HepG2 (cell line): ENCODE measurements at regions of chr2 and their contacts with region 1.

Region 1: DNA sequence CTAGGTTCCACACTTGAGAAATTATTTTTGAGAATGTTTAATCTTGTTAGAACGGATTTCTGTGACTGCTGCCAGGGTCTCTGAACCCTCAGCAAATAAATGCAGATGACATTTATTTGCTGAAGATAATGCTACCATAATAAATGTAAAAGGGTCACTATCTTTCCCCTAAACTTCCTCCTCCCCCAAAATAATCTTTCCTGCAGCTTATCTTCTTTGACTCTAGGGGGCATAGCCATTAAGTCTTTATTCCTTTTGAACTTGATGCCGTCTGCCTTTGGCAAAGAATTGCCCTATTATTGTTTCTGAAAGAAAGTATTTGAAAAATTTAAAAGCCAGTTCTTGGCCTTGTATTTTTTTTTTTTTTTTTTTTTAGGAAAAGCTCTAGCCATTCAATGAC is 63.6 kb upstream of the ACSL3 start:
- DNase-seq: peak; percentile 74
- ATAC-seq: no peak
- H3K4me3 ChIP-seq: peak overlapping the region; percentile 22 to 51 (median 36); a peak in 5 of 6 replicates
- H3K27ac ChIP-seq: peak overlapping the region; percentile 96
- H3K4me1 ChIP-seq: peaks cover 80% of the 10 kb centered on the region
- H3K27me3 ChIP-seq: no peaks in the 10 kb centered on the region
- CTCF ChIP-seq: peak; percentile 67
- EP300 ChIP-seq: no peak
- POLR2A ChIP-seq: no peak
- RAD21 ChIP-seq: no peak

Region 2: GRCh38 chr2:222690564-222691200 is 106.6 kb before region 1 on chr2:
- CTCF ChIA-PET with region 1: interaction called, 7 read pairs
- POLR2A ChIA-PET with region 1: interaction called, 3 read pairs
- in situ Hi-C with region 1: no loop called
- intact Hi-C with region 1: loop called (anchors 1 kb)
- DNase-seq: peak; percentile 81
- ATAC-seq: peak; percentile 92
- H3K4me3 ChIP-seq: no peak overlapping the region
- H3K27ac ChIP-seq: no peak overlapping the region
- H3K4me1 ChIP-seq: peaks cover 12% of the 10 kb centered on the region
- H3K27me3 ChIP-seq: no peaks in the 10 kb centered on the region
- CTCF ChIP-seq: peak; percentile 99
- EP300 ChIP-seq: peak in 1 of 2 experiments; percentile 20; a peak in 1 of 4 replicates
- POLR2A ChIP-seq: no peak
- RAD21 ChIP-seq: peak; percentile 97

Region 3: DNA sequence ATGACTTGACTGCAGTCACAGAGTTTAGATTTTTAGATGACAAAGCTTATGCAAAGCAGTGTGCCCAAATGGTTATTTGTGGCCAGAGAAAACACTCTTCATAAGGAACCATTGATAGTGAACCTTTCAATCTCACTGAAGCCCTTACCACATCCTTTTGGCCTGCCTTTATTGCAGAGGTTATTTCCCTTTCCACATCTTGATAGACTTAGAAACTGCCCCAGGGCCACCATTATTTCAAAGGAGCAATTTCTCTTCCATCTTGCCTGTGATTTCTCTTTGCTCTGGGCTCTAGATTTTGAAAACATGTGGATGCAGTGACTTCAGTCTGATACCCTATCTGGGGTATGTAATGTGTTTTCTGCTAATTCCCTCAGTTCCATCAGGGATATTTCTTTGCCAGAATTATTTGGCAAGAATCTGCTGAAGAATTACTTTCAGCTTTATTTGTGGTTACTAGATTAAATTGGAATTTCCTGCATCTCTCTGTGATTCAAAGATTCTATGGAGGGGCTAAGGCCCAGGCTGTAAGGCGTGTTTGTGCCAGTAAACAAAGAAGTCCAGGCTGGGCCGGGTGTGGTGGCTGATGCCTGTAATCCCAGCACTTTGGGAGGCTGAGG is 74.8 kb before region 1 on chr2:
- CTCF ChIA-PET with region 1: no interaction called
- POLR2A ChIA-PET with region 1: no interaction called
- in situ Hi-C with region 1: no loop called
- intact Hi-C with region 1: no loop called
- DNase-seq: no peak
- ATAC-seq: no peak
- H3K4me3 ChIP-seq: no peak overlapping the region
- H3K27ac ChIP-seq: no peak overlapping the region
- H3K4me1 ChIP-seq: peaks cover 25% of the 10 kb centered on the region
- H3K27me3 ChIP-seq: no peaks in the 10 kb centered on the region
- CTCF ChIP-seq: no peak
- EP300 ChIP-seq: no peak
- POLR2A ChIP-seq: no peak
- RAD21 ChIP-seq: no peak

Region 4: GRCh38 chr2:222734703-222735014 is 62.6 kb before region 1 on chr2:
- CTCF ChIA-PET with region 1: no interaction called
- POLR2A ChIA-PET with region 1: interaction called, 23 read pairs
- in situ Hi-C with region 1: no loop called
- intact Hi-C with region 1: loop called (anchors 1 kb)
- DNase-seq: peak; percentile 49
- ATAC-seq: peak; percentile 33
- H3K4me3 ChIP-seq: no peak overlapping the region; a peak in 1 of 6 replicates
- H3K27ac ChIP-seq: peak overlapping the region; percentile 87
- H3K4me1 ChIP-seq: peaks cover 87% of the 10 kb centered on the region
- H3K27me3 ChIP-seq: no peaks in the 10 kb centered on the region
- CTCF ChIP-seq: no peak
- EP300 ChIP-seq: no peak
- POLR2A ChIP-seq: no peak
- RAD21 ChIP-seq: no peak

Region 5: DNA sequence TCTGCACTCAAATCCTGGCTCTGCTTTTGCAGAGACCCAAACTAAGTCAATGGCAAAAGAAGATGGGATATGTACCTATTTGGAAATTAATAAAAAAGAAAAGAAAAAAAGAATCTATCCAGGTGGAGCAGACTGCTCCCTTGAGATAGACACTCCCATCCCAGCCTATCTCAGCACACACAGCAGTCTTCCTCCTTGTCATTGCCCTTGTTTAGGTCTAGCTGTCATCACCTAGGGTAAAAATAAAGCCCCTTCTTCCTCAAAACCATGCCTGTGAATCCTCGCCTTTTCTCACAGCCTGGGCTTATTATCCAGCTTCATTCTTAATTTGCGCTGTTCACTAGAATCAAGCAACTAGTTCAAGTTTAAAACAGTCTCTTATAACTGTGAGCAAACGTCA is 32.9 kb after region 1 on chr2:
- CTCF ChIA-PET with region 1: no interaction called
- POLR2A ChIA-PET with region 1: interaction called, 12 read pairs
- in situ Hi-C with region 1: no loop called
- intact Hi-C with region 1: no loop called
- DNase-seq: no peak
- ATAC-seq: no peak
- H3K4me3 ChIP-seq: no peak overlapping the region
- H3K27ac ChIP-seq: no peak overlapping the region
- H3K4me1 ChIP-seq: peaks cover 30% of the 10 kb centered on the region
- H3K27me3 ChIP-seq: no peaks in the 10 kb centered on the region
- CTCF ChIP-seq: no peak
- EP300 ChIP-seq: no peak
- POLR2A ChIP-seq: no peak
- RAD21 ChIP-seq: no peak

Region 6: DNA sequence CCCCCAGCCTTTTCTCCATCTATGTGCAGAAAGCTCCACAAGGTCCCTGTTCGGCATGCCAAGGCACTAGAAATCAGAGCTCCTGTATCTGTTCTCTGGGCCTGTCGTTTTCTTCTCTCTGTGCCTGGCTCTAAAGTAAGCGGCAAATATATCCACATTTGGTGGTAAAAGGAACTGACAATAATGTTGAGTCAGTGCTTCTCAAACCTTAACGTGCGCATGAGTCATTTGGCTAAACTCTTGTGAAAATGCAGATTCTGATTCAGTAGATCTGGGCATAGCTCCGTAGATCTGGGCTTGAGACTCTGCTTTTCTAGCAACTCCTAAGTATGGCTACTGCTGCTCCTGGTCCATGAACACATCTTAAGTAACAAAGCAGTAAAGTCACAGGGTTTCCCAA is 47.1 kb after region 1 on chr2:
- CTCF ChIA-PET with region 1: interaction called, 5 read pairs
- POLR2A ChIA-PET with region 1: interaction called, 33 read pairs
- in situ Hi-C with region 1: no loop called
- intact Hi-C with region 1: loop called (anchors 1 kb)
- DNase-seq: no peak
- ATAC-seq: no peak
- H3K4me3 ChIP-seq: no peak overlapping the region
- H3K27ac ChIP-seq: no peak overlapping the region
- H3K4me1 ChIP-seq: peaks cover 40% of the 10 kb centered on the region
- H3K27me3 ChIP-seq: no peaks in the 10 kb centered on the region
- CTCF ChIP-seq: no peak
- EP300 ChIP-seq: no peak
- POLR2A ChIP-seq: no peak
- RAD21 ChIP-seq: no peak

Region 7: DNA sequence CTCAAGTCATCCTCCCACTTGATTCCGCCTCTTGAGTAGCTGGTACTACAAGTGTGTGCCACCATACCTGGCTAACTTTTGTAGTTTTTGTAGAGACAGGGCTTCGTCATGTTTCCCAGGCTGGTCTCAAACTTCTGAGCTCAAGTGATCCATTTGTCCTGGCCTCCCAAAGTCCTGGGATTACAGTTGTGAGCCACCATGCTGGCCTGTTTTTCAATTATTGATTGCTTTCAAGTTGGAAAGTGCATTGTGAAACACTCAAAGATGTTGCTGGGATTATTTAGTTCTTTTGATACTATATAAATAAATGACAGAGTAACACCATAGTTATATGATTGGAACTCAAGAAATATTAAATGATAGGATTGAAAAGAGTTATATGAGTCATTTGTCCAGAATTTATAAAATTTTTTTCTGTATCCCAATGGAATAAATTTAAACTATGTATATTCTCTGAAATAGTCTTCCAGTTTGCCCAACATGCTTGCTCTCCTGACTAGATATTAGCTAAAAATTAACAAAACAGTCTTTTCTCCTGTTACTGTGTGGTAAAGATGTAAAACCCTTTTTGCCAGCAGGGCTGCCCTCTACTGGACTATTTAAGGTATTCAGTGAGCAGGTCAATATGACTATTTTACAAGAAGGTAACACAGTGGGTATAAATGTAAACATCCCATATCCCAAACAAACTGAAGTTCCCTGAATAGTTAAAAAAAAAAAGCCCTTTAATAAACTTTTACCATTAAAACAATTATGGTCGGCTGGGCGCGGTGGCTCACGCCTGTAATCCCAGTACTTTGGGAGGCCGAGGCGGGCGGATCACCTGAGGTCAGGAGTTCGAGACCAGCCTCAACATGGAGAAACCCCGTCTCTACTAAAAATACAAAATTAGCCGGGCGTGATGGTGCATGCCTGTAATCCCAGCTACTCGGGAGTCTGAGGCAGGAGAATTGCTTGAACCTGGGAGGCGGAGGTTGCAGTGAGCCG is 106.3 kb after region 1 on chr2:
- CTCF ChIA-PET with region 1: interaction called, 11 read pairs
- POLR2A ChIA-PET with region 1: interaction called, 32 read pairs
- in situ Hi-C with region 1: loop called (anchors 5 kb)
- intact Hi-C with region 1: loop called (anchors 1 kb)
- DNase-seq: peak; percentile 86
- ATAC-seq: peak; percentile 76
- H3K4me3 ChIP-seq: no peak overlapping the region
- H3K27ac ChIP-seq: peak overlapping the region; percentile 48
- H3K4me1 ChIP-seq: peaks cover 100% of the 10 kb centered on the region
- H3K27me3 ChIP-seq: no peaks in the 10 kb centered on the region
- CTCF ChIP-seq: peak; percentile 81
- EP300 ChIP-seq: peak in 1 of 2 experiments; percentile 33; a peak in 1 of 4 replicates
- POLR2A ChIP-seq: no peak
- RAD21 ChIP-seq: peak; percentile 89